Activated CD4-positive, alpha-beta T cell treated with anti-CD3 and anti-CD28 coated beads, Interleukin-2, amount 10 ng/mL, durations not matched to agents 24 days and 14 days (primary cell): ENCODE measurements at regions of chr14 and their contacts with region 1.

Region 1: DNA sequence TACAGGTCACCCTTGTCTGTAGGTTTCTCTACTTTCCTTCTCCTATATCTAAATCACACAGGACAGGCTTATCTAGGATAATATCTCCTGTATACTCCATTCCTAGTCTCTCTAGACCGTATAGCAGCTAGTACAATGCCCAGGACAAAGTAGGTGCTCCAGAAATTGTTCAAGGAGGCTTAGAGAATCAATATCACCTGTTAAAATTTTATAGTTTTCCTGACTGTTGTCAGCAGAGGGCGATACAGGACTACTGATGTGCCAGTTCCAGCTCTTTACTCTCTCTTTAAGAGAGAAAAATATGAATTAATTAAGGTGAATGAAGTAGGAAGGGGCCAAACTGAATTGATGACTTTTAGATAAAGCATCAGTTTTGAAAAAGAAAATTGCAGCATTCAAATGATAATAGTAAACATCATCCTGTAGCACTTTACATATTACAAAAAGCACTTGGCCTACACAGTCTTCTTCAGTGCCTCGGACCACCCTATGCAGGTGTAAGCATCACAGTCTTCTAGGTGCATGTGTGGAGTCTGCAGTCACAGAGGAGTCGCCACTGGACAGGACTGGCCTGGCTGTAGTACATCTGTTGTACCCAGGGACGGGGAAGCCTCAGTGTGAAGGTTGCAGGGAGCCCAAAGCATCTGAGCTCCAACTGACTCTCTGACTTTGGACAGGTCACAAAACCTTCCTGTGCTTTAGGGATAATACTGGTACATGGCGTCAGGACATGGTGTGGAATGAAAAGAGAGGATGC is 61.9 kb upstream of the MAX start:
- DNase-seq: peak; percentile 85
- H3K4me3 Mint-ChIP-seq: no peak overlapping the region
- H3K27ac Mint-ChIP-seq: no peak overlapping the region
- H3K4me1 Mint-ChIP-seq: peaks cover 32% of the 10 kb centered on the region
- H3K27me3 Mint-ChIP-seq: no peaks in the 10 kb centered on the region

Region 2: DNA sequence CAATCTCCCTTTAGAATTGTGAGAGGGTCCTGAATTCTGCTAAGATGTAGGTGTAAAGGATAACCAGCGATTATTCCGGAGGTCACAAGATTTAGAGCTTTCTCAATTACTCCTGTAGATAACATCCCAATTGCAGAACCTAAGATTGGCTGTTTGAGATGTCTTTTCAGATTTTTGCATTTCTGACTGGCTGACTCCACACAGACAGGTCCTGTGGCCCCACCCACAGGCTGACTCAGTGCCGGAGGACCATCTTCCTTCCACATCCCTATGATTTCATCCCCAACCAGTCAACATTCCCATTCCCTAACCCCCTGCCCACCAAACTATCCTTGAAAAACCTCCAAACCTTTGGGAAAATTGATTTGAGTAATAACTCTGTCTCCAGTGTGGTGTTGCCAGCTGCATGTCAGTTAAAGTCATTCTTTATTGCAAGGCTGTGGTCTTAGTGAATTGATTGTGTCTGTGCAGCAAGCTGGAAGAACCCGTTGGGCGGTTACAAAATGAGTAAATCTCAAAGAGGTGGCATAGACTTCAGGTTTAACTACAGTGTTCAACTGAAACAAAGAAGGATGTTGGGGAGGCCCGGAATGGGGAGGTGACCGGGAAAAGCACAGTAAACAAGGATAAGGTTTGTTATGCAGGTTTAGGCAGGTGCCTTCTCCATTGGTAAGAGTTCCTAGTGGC is 167.0 kb before region 1 on chr14:
- intact Hi-C with region 1: no loop called
- DNase-seq: no peak
- H3K4me3 Mint-ChIP-seq: no peak overlapping the region
- H3K27ac Mint-ChIP-seq: no peak overlapping the region
- H3K4me1 Mint-ChIP-seq: peaks cover 23% of the 10 kb centered on the region
- H3K27me3 Mint-ChIP-seq: no peaks in the 10 kb centered on the region

Region 3: DNA sequence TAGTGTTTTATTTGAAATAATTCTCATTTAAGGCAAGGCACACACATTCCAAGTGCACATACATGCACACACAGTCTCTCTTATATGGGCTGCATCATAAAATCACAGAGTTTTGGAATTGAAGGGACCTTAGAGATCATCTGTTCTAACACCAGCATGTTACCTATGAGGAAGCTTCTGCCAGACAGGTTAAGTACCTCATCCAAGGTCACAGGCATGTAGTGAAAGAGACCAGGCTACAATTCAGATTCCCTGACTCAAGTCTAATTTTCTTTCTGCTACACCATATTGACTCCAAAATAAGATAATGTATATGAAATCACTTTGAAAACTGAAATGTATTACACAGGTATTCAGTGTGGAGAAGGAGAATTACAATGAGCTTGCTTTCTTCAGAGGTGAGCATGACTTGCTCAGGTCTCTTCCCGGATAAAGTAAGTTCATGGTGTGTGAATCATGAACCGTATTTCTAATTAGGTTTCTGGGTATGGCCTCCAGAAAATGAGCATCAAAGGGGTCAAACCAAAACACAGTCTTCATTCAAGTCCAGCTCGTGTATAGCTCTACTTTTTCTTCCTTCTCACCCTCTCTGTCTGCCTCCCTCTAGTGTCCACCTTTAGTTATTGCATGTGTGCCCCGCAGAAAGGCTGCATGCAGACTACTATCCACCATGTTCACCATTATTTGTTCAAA is 660.2 kb after region 1 on chr14:
- intact Hi-C with region 1: loop called (anchors 2 kb)
- DNase-seq: peak; percentile 91
- H3K4me3 Mint-ChIP-seq: no peak overlapping the region
- H3K27ac Mint-ChIP-seq: no peak overlapping the region
- H3K4me1 Mint-ChIP-seq: peaks cover 17% of the 10 kb centered on the region
- H3K27me3 Mint-ChIP-seq: peaks cover 9% of the 10 kb centered on the region

Region 4: GRCh38 chr14:65958664-65959562 is 794.7 kb after region 1 on chr14:
- intact Hi-C with region 1: loop called (anchors 1 kb)
- DNase-seq: peak; percentile 63
- H3K4me3 Mint-ChIP-seq: no peak overlapping the region
- H3K27ac Mint-ChIP-seq: no peak overlapping the region
- H3K4me1 Mint-ChIP-seq: peaks cover 33% of the 10 kb centered on the region
- H3K27me3 Mint-ChIP-seq: peaks cover 19% of the 10 kb centered on the region

Region 5: GRCh38 chr14:66070509-66071319 is 906.5 kb after region 1 on chr14:
- intact Hi-C with region 1: loop called (anchors 1 kb)
- DNase-seq: peak; percentile 92
- H3K4me3 Mint-ChIP-seq: no peak overlapping the region
- H3K27ac Mint-ChIP-seq: no peak overlapping the region
- H3K4me1 Mint-ChIP-seq: peaks cover 5% of the 10 kb centered on the region
- H3K27me3 Mint-ChIP-seq: peaks cover 9% of the 10 kb centered on the region